Activated CD4-positive, alpha-beta T cell treated with anti-CD3 and anti-CD28 coated beads for 36 hours (primary cell): ENCODE measurements at regions of chr20 and their contacts with region 1.

Region 1: GRCh38 chr20:62136283-62137091 is 6.7 kb downstream of the PSMA7 start:
- DNase-seq: peak; percentile 83
- ATAC-seq: peak; percentile 51
- H3K4me3 Mint-ChIP-seq: no peak overlapping the region
- H3K27ac Mint-ChIP-seq: peak overlapping the region; percentile 75
- H3K4me1 Mint-ChIP-seq: peaks cover 41% of the 10 kb centered on the region
- H3K27me3 Mint-ChIP-seq: no peaks in the 10 kb centered on the region

Region 2: GRCh38 chr20:62010551-62011402 is 125.7 kb before region 1 on chr20:
- CTCF ChIA-PET with region 1: interaction called, 15 read pairs
- POLR2A ChIA-PET with region 1: interaction called, 3 read pairs
- intact Hi-C with region 1: loop called (anchors 1 kb)
- DNase-seq: peak; percentile 75
- ATAC-seq: peak; percentile 81
- H3K4me3 Mint-ChIP-seq: no peak overlapping the region
- H3K27ac Mint-ChIP-seq: peak overlapping the region; percentile 29
- H3K4me1 Mint-ChIP-seq: peaks cover 3% of the 10 kb centered on the region
- H3K27me3 Mint-ChIP-seq: no peaks in the 10 kb centered on the region

Region 3: GRCh38 chr20:62025832-62026563 is 110.5 kb before region 1 on chr20:
- CTCF ChIA-PET with region 1: interaction called, 11 read pairs
- POLR2A ChIA-PET with region 1: no interaction called
- intact Hi-C with region 1: loop called in 1 of 2 experiments (anchors 5 kb)
- DNase-seq: peak; percentile 45
- ATAC-seq: peak; percentile 81
- H3K4me3 Mint-ChIP-seq: no peak overlapping the region
- H3K27ac Mint-ChIP-seq: peak overlapping the region; percentile 22
- H3K4me1 Mint-ChIP-seq: peaks cover 54% of the 10 kb centered on the region
- H3K27me3 Mint-ChIP-seq: no peaks in the 10 kb centered on the region

Region 4: GRCh38 chr20:62150310-62150575 is 13.8 kb after region 1 on chr20:
- CTCF ChIA-PET with region 1: interaction called, 5 read pairs
- POLR2A ChIA-PET with region 1: interaction called, 14 read pairs
- intact Hi-C with region 1: no loop called
- DNase-seq: no peak
- ATAC-seq: no peak
- H3K4me3 Mint-ChIP-seq: no peak overlapping the region
- H3K27ac Mint-ChIP-seq: no peak overlapping the region
- H3K4me1 Mint-ChIP-seq: peaks cover 22% of the 10 kb centered on the region
- H3K27me3 Mint-ChIP-seq: no peaks in the 10 kb centered on the region

Region 5: GRCh38 chr20:62516345-62516744 is 379.9 kb after region 1 on chr20:
- CTCF ChIA-PET with region 1: no interaction called
- POLR2A ChIA-PET with region 1: no interaction called
- intact Hi-C with region 1: no loop called
- DNase-seq: no peak
- ATAC-seq: no peak
- H3K4me3 Mint-ChIP-seq: no peak overlapping the region
- H3K27ac Mint-ChIP-seq: no peak overlapping the region
- H3K4me1 Mint-ChIP-seq: peaks cover 4% of the 10 kb centered on the region
- H3K27me3 Mint-ChIP-seq: peaks cover 19% of the 10 kb centered on the region